MCF 10A (cell line): ENCODE measurements at regions of chr1 and their contacts with region 1.

Region 1: DNA sequence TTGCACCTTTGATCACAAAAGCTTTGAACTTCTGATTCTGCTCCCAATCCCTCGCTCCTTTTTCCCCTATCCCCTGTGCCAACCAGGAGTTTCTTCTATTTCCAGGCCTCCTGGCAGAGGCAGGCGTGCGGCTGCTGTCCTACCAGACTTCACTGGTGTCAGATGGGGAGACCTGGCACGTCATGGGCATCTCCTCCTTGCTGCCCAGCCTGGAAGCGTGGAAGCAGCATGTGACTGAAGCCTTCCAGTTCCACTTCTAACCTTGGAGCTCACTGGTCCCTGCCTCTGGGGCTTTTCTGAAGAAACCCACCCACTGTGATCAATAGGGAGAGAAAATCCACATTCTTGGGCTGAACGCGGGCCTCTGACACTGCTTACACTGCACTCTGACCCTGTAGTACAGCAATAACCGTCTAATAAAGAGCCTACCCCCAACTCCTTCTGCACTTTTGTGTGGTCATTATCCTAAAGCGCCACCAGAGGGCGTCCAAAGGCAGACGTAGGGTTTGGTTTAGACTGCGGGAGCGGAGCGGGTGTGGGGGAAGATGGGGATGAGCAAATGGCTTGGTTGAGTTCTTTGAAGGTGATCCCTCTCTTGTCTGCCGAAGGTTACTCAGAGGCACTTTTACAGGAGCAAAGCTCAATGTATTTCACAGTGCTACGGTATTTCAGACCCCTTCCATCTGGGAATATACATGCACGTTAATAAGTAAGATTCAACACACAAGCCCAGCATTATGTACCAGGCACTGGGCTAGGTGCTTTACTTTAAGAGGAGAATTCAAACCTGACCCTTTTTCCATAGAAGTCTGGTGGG is 24.7 kb downstream of the HMGCS2 start:
- DNase-seq: peak; percentile 82
- H3K4me3 Mint-ChIP-seq: no peak overlapping the region
- H3K27ac Mint-ChIP-seq: no peak overlapping the region
- H3K4me1 Mint-ChIP-seq: peaks cover 6% of the 10 kb centered on the region
- H3K27me3 Mint-ChIP-seq: no peaks in the 10 kb centered on the region
- CTCF ChIP-seq: peak; percentile 73

Region 2: DNA sequence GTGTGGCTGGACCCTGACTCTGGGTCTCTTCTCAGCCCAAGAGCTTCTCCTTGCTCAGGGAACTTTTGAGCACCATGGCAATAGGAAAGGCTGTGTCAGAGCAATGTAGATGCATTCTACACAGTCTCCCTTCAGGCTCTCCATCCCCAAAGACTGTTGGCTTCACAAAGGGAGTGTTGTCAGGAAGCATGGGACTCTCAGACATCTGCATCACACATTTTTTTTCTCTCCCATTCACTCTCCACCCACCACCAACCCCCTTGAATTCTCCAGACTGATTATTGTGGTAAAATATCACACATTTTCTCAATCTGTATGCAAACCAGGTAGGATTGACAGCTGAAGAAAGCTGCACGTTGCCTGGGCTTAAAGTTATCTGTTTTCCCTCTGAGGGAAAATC is 498.1 kb before region 1 on chr1:
- CTCF ChIA-PET with region 1: no interaction called
- POLR2A ChIA-PET with region 1: no interaction called
- intact Hi-C with region 1: no loop called
- DNase-seq: no peak
- H3K4me3 Mint-ChIP-seq: no peak overlapping the region
- H3K27ac Mint-ChIP-seq: no peak overlapping the region
- H3K4me1 Mint-ChIP-seq: no peaks in the 10 kb centered on the region
- H3K27me3 Mint-ChIP-seq: no peaks in the 10 kb centered on the region
- CTCF ChIP-seq: no peak

Region 3: GRCh38 chr1:119631433-119632102 is 112.4 kb before region 1 on chr1:
- CTCF ChIA-PET with region 1: no interaction called
- POLR2A ChIA-PET with region 1: no interaction called
- intact Hi-C with region 1: no loop called
- DNase-seq: peak; percentile 83
- H3K4me3 Mint-ChIP-seq: peak overlapping the region; percentile 38
- H3K27ac Mint-ChIP-seq: no peak overlapping the region
- H3K4me1 Mint-ChIP-seq: peaks cover 9% of the 10 kb centered on the region
- H3K27me3 Mint-ChIP-seq: no peaks in the 10 kb centered on the region
- CTCF ChIP-seq: no peak

Region 4: GRCh38 chr1:119732465-119733168 is 11.4 kb before region 1 on chr1:
- CTCF ChIA-PET with region 1: interaction called, 42 read pairs
- POLR2A ChIA-PET with region 1: no interaction called
- intact Hi-C with region 1: no loop called
- DNase-seq: no peak
- H3K4me3 Mint-ChIP-seq: no peak overlapping the region
- H3K27ac Mint-ChIP-seq: no peak overlapping the region
- H3K4me1 Mint-ChIP-seq: no peaks in the 10 kb centered on the region
- H3K27me3 Mint-ChIP-seq: no peaks in the 10 kb centered on the region
- CTCF ChIP-seq: no peak

Region 5: GRCh38 chr1:119768778-119769177 is 24.8 kb after region 1 on chr1 and contains the start of gene HMGCS2:
- CTCF ChIA-PET with region 1: interaction called, 10 read pairs
- POLR2A ChIA-PET with region 1: no interaction called
- intact Hi-C with region 1: no loop called
- DNase-seq: no peak
- H3K4me3 Mint-ChIP-seq: no peak within 1 kb of the TSS
- H3K27ac Mint-ChIP-seq: no peak within 1 kb of the TSS
- H3K4me1 Mint-ChIP-seq: peaks cover 5% of the 10 kb centered on the region
- H3K27me3 Mint-ChIP-seq: no peaks in the 10 kb centered on the region
- CTCF ChIP-seq: no peak
- total RNA-seq, gene HMGCS2: not detected in 2 replicates

Region 6: DNA sequence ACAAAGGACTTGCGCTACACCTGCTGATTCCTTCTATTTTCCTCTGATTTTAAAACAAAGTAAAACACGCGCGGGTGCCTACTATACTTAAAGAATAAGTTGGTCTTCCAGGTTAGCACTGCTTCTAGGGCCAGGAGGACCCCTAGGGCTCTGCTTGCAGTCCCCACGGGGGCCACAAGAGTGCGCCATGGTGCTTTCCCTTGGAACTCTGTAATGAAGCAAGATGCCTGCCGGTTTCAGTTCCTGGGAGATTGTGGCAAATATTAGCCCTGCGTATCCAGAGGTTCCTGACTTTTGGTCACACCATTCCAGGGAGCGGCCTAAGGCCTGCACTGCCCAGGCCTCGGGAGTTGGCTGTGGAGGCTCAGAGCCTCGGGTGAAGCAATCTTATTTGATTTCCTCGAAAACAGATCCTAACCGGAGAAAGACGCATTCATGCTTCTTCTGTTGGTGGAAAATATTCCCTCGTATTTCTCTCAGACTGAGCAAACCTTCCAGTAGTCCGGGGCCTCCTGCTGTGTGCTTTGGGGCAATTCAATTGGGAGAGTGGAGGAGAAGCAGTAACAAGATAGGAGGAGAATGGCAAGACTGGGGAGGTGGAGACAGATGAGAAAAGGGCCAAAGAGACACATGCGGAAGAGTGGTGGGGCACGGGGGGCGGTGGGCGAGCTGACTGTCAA is 127.1 kb after region 1 on chr1:
- CTCF ChIA-PET with region 1: interaction called, 14 read pairs
- POLR2A ChIA-PET with region 1: no interaction called
- intact Hi-C with region 1: no loop called
- DNase-seq: peak; percentile 77
- H3K4me3 Mint-ChIP-seq: no peak overlapping the region
- H3K27ac Mint-ChIP-seq: peak overlapping the region; percentile 59
- H3K4me1 Mint-ChIP-seq: peaks cover 6% of the 10 kb centered on the region
- H3K27me3 Mint-ChIP-seq: no peaks in the 10 kb centered on the region
- CTCF ChIP-seq: peak; percentile 98

Region 7: GRCh38 chr1:119948342-119949214 is 204.6 kb after region 1 on chr1:
- CTCF ChIA-PET with region 1: interaction called, 22 read pairs
- POLR2A ChIA-PET with region 1: no interaction called
- intact Hi-C with region 1: no loop called
- DNase-seq: peak; percentile 78
- H3K4me3 Mint-ChIP-seq: no peak overlapping the region
- H3K27ac Mint-ChIP-seq: peak overlapping the region; percentile 27
- H3K4me1 Mint-ChIP-seq: peaks cover 13% of the 10 kb centered on the region
- H3K27me3 Mint-ChIP-seq: no peaks in the 10 kb centered on the region
- CTCF ChIP-seq: peak; percentile 85